ENCODE measurements at regions of chr14 and their contacts with region 1.

Region 1: DNA sequence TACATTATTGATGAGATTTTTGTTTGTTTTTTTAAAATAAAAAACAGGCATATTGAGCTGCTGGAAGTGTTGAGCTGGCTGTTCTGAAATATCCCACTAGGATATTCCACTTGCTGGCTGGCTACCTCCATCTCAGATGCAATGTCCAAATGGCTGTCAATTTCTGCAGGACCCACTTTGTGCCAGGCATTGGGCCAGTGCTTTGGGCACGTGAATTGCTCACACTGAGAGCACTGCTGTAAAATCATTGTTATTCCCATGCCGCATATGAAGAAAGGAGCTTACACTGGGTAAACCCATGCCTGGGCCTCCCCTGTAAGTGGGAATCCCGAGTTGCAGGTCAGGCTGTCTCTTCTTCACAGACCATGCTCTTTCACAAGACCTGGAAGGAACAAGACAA is 56.7 kb downstream of the RGS6 start:
- DNase-seq: peak in 2 of 10 donors; percentile 10 to 31
- H3K4me3 ChIP-seq: no peak overlapping the region
- H3K27ac ChIP-seq: peak overlapping the region in 12 of 59 donors; percentile 2 to 66 (median 17)
- H3K27me3 ChIP-seq: no peaks in the 10 kb centered on the region
- CTCF ChIP-seq: no peak

Region 2: GRCh38 chr14:72013721-72014345 is 24.9 kb after region 1 on chr14:
- intact Hi-C with region 1: no loop called
- DNase-seq: no peak
- H3K4me3 ChIP-seq: peak overlapping the region in 12 of 59 donors; percentile 4 to 40 (median 18)
- H3K27ac ChIP-seq: peak overlapping the region in 29 of 59 donors; percentile 2 to 69 (median 29)
- H3K27me3 ChIP-seq: no peaks in the 10 kb centered on the region
- CTCF ChIP-seq: no peak

Region 3: GRCh38 chr14:72033365-72033764 is 44.4 kb after region 1 on chr14:
- intact Hi-C with region 1: loop called in 1 of 2 experiments (anchors 5 kb)
- DNase-seq: no peak
- H3K4me3 ChIP-seq: no peak overlapping the region
- H3K27ac ChIP-seq: no peak overlapping the region
- H3K27me3 ChIP-seq: no peaks in the 10 kb centered on the region
- CTCF ChIP-seq: no peak

Measured in dorsolateral prefrontal cortex (tissue), 120 donors.